ENCODE measurements at regions of chrX and their contacts with region 1.

Region 1: GRCh38 chrX:54044126-54044876 is at the start of gene PHF8:
- DNase-seq: peak; percentile 94 to 95
- ATAC-seq: peak; percentile 94 to 97 (median 95)
- H3K4me3 ChIP-seq: peak within 1 kb of the TSS; percentile 47 to 88 (median 76)
- H3K27ac ChIP-seq: peak within 1 kb of the TSS; percentile 85 to 98 (median 96)
- H3K4me1 ChIP-seq: peaks cover 0 to 8% (median 0%) of the 10 kb centered on the region in 9 donors
- H3K27me3 ChIP-seq: no peaks in the 10 kb centered on the region
- CTCF ChIP-seq: peak in 1 of 9 donors; percentile 12
- total RNA-seq, gene PHF8: 9.3 to 12.9 (median 11.3) TPM

Region 2: DNA sequence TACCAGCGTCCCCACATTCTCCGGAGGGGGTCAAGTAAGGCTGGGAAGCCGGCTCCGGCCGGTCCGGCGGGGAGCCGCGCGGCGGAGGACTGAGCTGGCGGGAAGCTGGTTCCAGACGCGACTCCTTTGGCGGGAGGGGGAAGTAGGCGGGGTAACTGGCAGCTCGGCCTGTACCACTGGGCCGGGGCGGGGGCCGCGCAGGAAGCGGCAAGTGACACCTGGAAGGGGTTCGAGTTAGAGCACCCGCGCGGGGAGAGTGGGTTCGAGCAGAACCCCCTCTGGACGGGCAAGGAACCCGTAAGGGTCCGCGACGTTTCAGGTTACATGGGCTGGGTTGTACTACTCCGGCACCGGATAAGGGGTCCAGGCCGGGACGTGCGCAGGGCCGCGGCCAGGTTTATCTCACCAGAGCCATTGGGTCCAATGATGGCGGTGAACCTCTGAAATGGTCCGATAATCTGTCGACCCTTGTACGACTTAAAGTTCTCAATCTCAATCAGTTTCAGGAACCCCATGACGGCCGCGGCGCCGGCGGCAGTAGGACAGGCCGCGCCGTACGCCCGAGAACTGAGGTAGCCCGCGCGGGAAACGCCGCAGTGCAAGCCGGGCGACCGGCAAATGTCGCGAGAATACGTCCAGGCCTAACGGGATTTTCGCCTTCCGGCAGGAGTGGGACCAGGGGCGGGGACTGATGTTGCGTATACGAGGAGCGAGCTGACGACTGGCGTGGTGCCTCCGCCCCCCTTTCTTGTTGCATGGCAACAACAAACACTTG is 622.0 kb before region 1 on chrX and contains the start of gene SMC1A:
- intact Hi-C with region 1: no loop called
- DNase-seq: peak; percentile 94 to 97
- ATAC-seq: peak; percentile 97 to 99 (median 98)
- H3K4me3 ChIP-seq: peak within 1 kb of the TSS; percentile 50 to 83 (median 70)
- H3K27ac ChIP-seq: peak within 1 kb of the TSS; percentile 81 to 96 (median 92)
- H3K4me1 ChIP-seq: peaks cover 0 to 29% (median 14%) of the 10 kb centered on the region in 9 donors
- H3K27me3 ChIP-seq: no peaks in the 10 kb centered on the region
- CTCF ChIP-seq: no peak
- total RNA-seq, gene SMC1A: 27.4 to 55.1 (median 35.8) TPM

Region 3: GRCh38 chrX:53683556-53684414 is 360.5 kb before region 1 on chrX:
- intact Hi-C with region 1: loop called in 1 of 10 experiments (anchors 10 kb)
- DNase-seq: peak; percentile 87 to 92
- ATAC-seq: peak; percentile 89 to 95 (median 92)
- H3K4me3 ChIP-seq: peak overlapping the region; percentile 53 to 90 (median 67)
- H3K27ac ChIP-seq: peak overlapping the region; percentile 68 to 93 (median 90)
- H3K4me1 ChIP-seq: peaks cover 0 to 36% (median 9%) of the 10 kb centered on the region in 9 donors
- H3K27me3 ChIP-seq: peaks cover 0 to 9% (median 0%) of the 10 kb centered on the region in 7 donors
- CTCF ChIP-seq: peak in 1 of 9 donors; percentile 20

Region 4: GRCh38 chrX:54076903-54077302 is 32.6 kb after region 1 on chrX:
- intact Hi-C with region 1: no loop called
- DNase-seq: no peak
- ATAC-seq: no peak
- H3K4me3 ChIP-seq: no peak overlapping the region
- H3K27ac ChIP-seq: no peak overlapping the region
- H3K4me1 ChIP-seq: no peaks in the 10 kb centered on the region
- H3K27me3 ChIP-seq: no peaks in the 10 kb centered on the region
- CTCF ChIP-seq: no peak

Region 5: GRCh38 chrX:54182864-54183608 is 138.7 kb after region 1 on chrX and contains the start of gene FAM120C:
- intact Hi-C with region 1: loop called in 4 of 10 experiments (anchors 2 to 10 kb)
- DNase-seq: peak; percentile 73
- ATAC-seq: peak; percentile 88 to 97 (median 94)
- H3K4me3 ChIP-seq: peak within 1 kb of the TSS; percentile 52 to 93 (median 78)
- H3K27ac ChIP-seq: peak within 1 kb of the TSS; percentile 77 to 92 (median 88)
- H3K4me1 ChIP-seq: peaks cover 0 to 37% (median 24%) of the 10 kb centered on the region in 9 donors
- H3K27me3 ChIP-seq: peaks cover 0 to 10% (median 0%) of the 10 kb centered on the region in 7 donors
- CTCF ChIP-seq: no peak
- total RNA-seq, gene FAM120C: 4.2 to 9.4 (median 6.7) TPM

Region 6: DNA sequence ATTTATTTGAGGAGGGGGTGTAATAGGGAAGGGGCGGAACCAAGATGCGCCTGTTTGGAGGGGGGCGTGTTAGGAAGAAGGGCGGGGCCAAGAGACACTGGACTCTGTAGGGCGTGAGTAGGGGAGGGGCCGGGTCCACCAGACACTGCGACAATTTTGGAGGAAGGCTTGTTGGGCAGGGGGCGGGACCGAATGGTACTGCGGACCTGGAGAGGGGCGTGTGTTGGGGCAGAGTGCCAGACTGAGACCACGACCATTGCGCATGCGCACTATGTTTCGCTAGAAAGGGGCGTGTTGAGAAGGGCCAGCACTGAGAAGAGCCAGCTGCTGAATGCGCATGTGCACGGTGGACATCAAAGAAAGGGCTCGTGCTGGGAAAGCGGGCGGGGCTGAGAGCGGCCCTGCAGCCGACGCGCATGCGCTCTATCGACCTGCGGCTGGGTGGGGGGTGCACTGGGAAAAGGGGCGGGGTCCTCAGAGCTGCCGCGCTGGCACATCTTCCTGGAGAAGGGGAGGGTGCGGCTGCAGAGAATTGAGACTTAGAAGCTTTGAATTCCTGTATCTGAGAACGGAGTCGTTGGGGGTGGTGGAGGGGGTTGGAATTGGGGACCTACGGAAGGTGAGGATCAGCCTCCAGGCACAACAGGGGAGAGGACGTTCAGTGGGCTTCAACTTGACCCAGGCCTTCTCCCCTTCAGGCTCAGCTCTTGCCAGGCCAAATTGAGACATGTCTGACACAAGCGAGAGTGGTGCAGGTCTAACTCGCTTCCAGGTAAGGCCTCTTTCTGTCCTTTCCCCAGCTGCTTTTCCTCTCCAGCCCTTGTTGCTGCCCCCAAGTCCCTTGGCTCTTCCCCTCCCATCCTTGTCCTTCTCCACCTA is 764.5 kb after region 1 on chrX:
- intact Hi-C with region 1: loop called in 1 of 10 experiments (anchors 10 kb)
- DNase-seq: peak; percentile 89 to 93
- ATAC-seq: peak; percentile 87 to 96 (median 93)
- H3K4me3 ChIP-seq: peak overlapping the region; percentile 47 to 84 (median 72)
- H3K27ac ChIP-seq: peak overlapping the region; percentile 65 to 94 (median 92)
- H3K4me1 ChIP-seq: peaks cover 0 to 16% (median 7%) of the 10 kb centered on the region in 9 donors
- H3K27me3 ChIP-seq: no peaks in the 10 kb centered on the region
- CTCF ChIP-seq: no peak